ENCODE measurements at regions of chr14 and their contacts with region 1.

Region 1: GRCh38 chr14:22570132-22570949 is 18.7 kb downstream of the DAD1 start:
- DNase-seq: peak; percentile 83
- H3K4me3 ChIP-seq: no peak overlapping the region
- H3K27ac ChIP-seq: no peak overlapping the region
- H3K4me1 ChIP-seq: peaks cover 40% of the 10 kb centered on the region
- H3K27me3 ChIP-seq: no peaks in the 10 kb centered on the region
- CTCF ChIP-seq: peak; percentile 55 to 63
- POLR2A ChIP-seq: no peak

Region 2: GRCh38 chr14:22386924-22387775 is 183.2 kb before region 1 on chr14:
- CTCF ChIA-PET with region 1: interaction called, 11 read pairs
- POLR2A ChIA-PET with region 1: no interaction called
- dilution Hi-C with region 1: no loop called
- intact Hi-C with region 1: loop called (anchors 1 kb)
- DNase-seq: peak; percentile 77
- H3K4me3 ChIP-seq: no peak overlapping the region
- H3K27ac ChIP-seq: no peak overlapping the region
- H3K4me1 ChIP-seq: peaks cover 6% of the 10 kb centered on the region
- H3K27me3 ChIP-seq: peaks cover 6 to 15% of the 10 kb centered on the region in 2 experiments
- CTCF ChIP-seq: peak; percentile 68 to 70
- POLR2A ChIP-seq: no peak

Region 3: GRCh38 chr14:22589096-22589839 is 18.9 kb after region 1 on chr14 and contains the start of gene DAD1:
- CTCF ChIA-PET with region 1: interaction called, 102 read pairs
- POLR2A ChIA-PET with region 1: interaction called, 4 read pairs
- dilution Hi-C with region 1: no loop called
- intact Hi-C with region 1: loop called (anchors 1 kb)
- DNase-seq: peak; percentile 100
- H3K4me3 ChIP-seq: peak within 1 kb of the TSS; percentile 70 to 99 (median 92)
- H3K27ac ChIP-seq: peak within 1 kb of the TSS; percentile 84
- H3K4me1 ChIP-seq: peaks cover 23% of the 10 kb centered on the region
- H3K27me3 ChIP-seq: peaks cover 3 to 4% of the 10 kb centered on the region in 2 experiments
- CTCF ChIP-seq: no peak
- POLR2A ChIP-seq: peak; percentile 98
- total RNA-seq, gene DAD1: 299 and 304 TPM in 2 replicates

Region 4: DNA sequence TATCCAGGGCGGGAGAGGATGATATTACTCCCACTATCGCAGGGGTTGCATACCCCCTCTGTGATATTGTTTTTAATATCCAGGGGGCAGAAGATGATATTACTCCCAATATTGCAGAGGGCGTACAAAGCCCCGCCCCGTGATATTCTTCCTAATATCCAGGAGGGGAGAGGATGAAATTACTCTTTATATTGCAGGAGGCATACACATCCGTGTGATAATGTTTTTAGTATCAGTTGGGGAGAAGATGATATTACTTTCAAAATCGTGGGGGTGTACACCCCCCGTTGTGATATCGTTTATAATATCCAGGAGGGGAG is 143.2 kb after region 1 on chr14:
- CTCF ChIA-PET with region 1: no interaction called
- POLR2A ChIA-PET with region 1: interaction called, 6 read pairs
- dilution Hi-C with region 1: no loop called
- intact Hi-C with region 1: loop called (anchors 5 kb)
- DNase-seq: no peak
- H3K4me3 ChIP-seq: peak overlapping the region in 1 of 3 experiments; percentile 13
- H3K27ac ChIP-seq: peak overlapping the region; percentile 28
- H3K4me1 ChIP-seq: peaks cover 23% of the 10 kb centered on the region
- H3K27me3 ChIP-seq: no peaks in the 10 kb centered on the region
- CTCF ChIP-seq: no peak
- POLR2A ChIP-seq: no peak

Region 5: GRCh38 chr14:22822571-22823098 is 252.3 kb after region 1 on chr14:
- CTCF ChIA-PET with region 1: interaction called, 63 read pairs
- POLR2A ChIA-PET with region 1: no interaction called
- dilution Hi-C with region 1: no loop called
- intact Hi-C with region 1: loop called (anchors 1 kb)
- DNase-seq: peak; percentile 91
- H3K4me3 ChIP-seq: peak overlapping the region; percentile 14 to 57 (median 32)
- H3K27ac ChIP-seq: peak overlapping the region; percentile 68
- H3K4me1 ChIP-seq: peaks cover 47% of the 10 kb centered on the region
- H3K27me3 ChIP-seq: no peaks in the 10 kb centered on the region
- CTCF ChIP-seq: peak; percentile 86 to 88
- POLR2A ChIP-seq: no peak

Region 6: GRCh38 chr14:22900081-22900799 is 329.9 kb after region 1 on chr14:
- CTCF ChIA-PET with region 1: interaction called, 19 read pairs
- POLR2A ChIA-PET with region 1: no interaction called
- dilution Hi-C with region 1: no loop called
- intact Hi-C with region 1: no loop called
- DNase-seq: peak; percentile 70
- H3K4me3 ChIP-seq: no peak overlapping the region
- H3K27ac ChIP-seq: no peak overlapping the region
- H3K4me1 ChIP-seq: no peaks in the 10 kb centered on the region
- H3K27me3 ChIP-seq: no peaks in the 10 kb centered on the region
- CTCF ChIP-seq: peak; percentile 38 to 65
- POLR2A ChIP-seq: no peak

Region 7: GRCh38 chr14:22929104-22929847 is 358.9 kb after region 1 on chr14 and contains the start of gene PRMT5:
- CTCF ChIA-PET with region 1: no interaction called
- POLR2A ChIA-PET with region 1: no interaction called
- dilution Hi-C with region 1: no loop called
- intact Hi-C with region 1: no loop called
- DNase-seq: peak; percentile 100
- H3K4me3 ChIP-seq: peak within 1 kb of the TSS; percentile 66 to 95 (median 81)
- H3K27ac ChIP-seq: peak within 1 kb of the TSS; percentile 68
- H3K4me1 ChIP-seq: peaks cover 16% of the 10 kb centered on the region
- H3K27me3 ChIP-seq: no peaks in the 10 kb centered on the region
- CTCF ChIP-seq: no peak
- POLR2A ChIP-seq: peak; percentile 64
- total RNA-seq, gene PRMT5: 67.2 and 73.1 TPM in 2 replicates

Measured in endothelial cell of umbilical vein (primary cell).